A549 (cell line): ENCODE measurements at regions of chr12 and their contacts with region 1.

Region 1: GRCh38 chr12:108618079-108618952 is 15.4 kb downstream of the SELPLG start:
- DNase-seq: peak; percentile 86 to 90
- ATAC-seq: peak; percentile 81 to 94
- H3K4me3 ChIP-seq: no peak overlapping the region
- H3K27ac ChIP-seq: peak overlapping the region in 1 of 2 experiments; percentile 17; a peak in 2 of 6 replicates
- H3K4me1 ChIP-seq: peaks cover 7% of the 10 kb centered on the region
- CTCF ChIP-seq: peak; percentile 96
- EP300 ChIP-seq: no peak
- POLR2A ChIP-seq: no peak
- RAD21 ChIP-seq: peak; percentile 96 to 98

Region 2: GRCh38 chr12:108514973-108515814 is 103.1 kb before region 1 on chr12 and contains the start of gene FICD:
- CTCF ChIA-PET with region 1: interaction called, 15 read pairs
- POLR2A ChIA-PET with region 1: no interaction called
- DNase-seq: peak; percentile 95 to 99
- ATAC-seq: peak; percentile 88 to 93
- H3K4me3 ChIP-seq: peak within 1 kb of the TSS; percentile 66
- H3K27ac ChIP-seq: peak within 1 kb of the TSS; percentile 66 to 85
- H3K4me1 ChIP-seq: no peaks in the 10 kb centered on the region; the same call in 2 of the 3 replicates
- CTCF ChIP-seq: no peak
- EP300 ChIP-seq: no peak
- POLR2A ChIP-seq: peak; percentile 53
- RAD21 ChIP-seq: no peak
- polyA plus RNA-seq, gene FICD: 1.7 and 4.8 TPM in 2 replicates

Region 3: GRCh38 chr12:108562348-108563135 is 55.8 kb before region 1 on chr12 and contains the start of gene ISCU:
- CTCF ChIA-PET with region 1: interaction called, 533 read pairs
- POLR2A ChIA-PET with region 1: interaction called, 11 read pairs
- DNase-seq: peak; percentile 93 to 99
- ATAC-seq: peak; percentile 72 to 87
- H3K4me3 ChIP-seq: peak within 1 kb of the TSS; percentile 82
- H3K27ac ChIP-seq: peak within 1 kb of the TSS; percentile 91 to 95
- H3K4me1 ChIP-seq: peaks cover 37% of the 10 kb centered on the region
- CTCF ChIP-seq: no peak
- EP300 ChIP-seq: no peak
- POLR2A ChIP-seq: peak; percentile 97
- RAD21 ChIP-seq: no peak
- polyA plus RNA-seq, gene ISCU: 174 and 177 TPM in 2 replicates

Region 4: DNA sequence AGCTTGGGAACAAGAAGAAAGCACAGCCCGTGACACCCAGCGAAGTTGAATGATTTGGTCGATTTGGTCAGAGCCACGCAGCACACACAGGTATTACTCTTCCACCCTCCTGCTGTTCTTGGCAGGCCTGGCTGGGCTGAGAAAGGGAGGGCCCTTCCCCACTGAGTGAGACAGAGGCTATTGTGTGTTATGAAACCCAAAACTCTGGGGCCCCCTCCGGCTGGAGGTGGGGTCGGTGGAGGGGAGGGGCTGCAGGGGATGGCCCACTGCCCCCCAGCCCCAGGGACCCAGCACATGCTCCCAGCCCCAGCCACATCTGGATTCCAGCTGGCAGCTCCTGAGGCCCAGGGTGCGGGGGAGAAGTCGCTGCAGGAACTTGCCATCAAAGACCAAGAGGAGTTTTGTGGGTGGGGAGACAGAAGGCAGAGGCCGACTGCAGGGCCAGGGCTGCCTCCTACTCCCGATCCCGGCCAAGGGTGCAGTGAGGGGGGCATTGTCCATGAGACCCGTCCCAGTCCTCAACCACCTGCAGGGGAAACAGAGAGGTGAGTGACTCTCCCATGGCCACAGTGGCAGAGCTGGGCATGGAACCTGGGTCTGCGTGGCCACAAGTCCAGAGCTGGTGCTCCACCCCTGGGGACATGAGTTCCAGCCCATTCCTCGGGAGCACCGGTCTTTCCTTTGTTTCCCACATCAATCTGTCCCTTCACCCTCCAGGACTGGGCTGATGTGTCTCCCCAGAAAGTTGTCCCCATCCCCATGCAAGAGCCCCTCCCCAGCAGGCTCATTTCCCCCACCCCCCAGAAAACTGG is 29.1 kb before region 1 on chr12:
- CTCF ChIA-PET with region 1: interaction called, 166 read pairs
- POLR2A ChIA-PET with region 1: no interaction called
- DNase-seq: no peak
- ATAC-seq: peak in 1 of 2 experiments; percentile 42; a peak in 3 of 6 replicates
- H3K4me3 ChIP-seq: no peak overlapping the region
- H3K27ac ChIP-seq: no peak overlapping the region
- H3K4me1 ChIP-seq: no peaks in the 10 kb centered on the region
- CTCF ChIP-seq: no peak
- EP300 ChIP-seq: no peak
- POLR2A ChIP-seq: no peak
- RAD21 ChIP-seq: no peak

Region 5: GRCh38 chr12:108649669-108650068 is 31.4 kb after region 1 on chr12:
- CTCF ChIA-PET with region 1: interaction called, 16 read pairs
- POLR2A ChIA-PET with region 1: no interaction called
- DNase-seq: peak in 1 of 2 experiments; percentile 24
- ATAC-seq: peak; percentile 16 to 46; a peak in 3 of 6 replicates
- H3K4me3 ChIP-seq: no peak overlapping the region
- H3K27ac ChIP-seq: peak overlapping the region in 1 of 2 experiments; percentile 32; a peak in 1 of 6 replicates
- H3K4me1 ChIP-seq: peaks cover 29% of the 10 kb centered on the region
- CTCF ChIP-seq: no peak
- EP300 ChIP-seq: no peak
- POLR2A ChIP-seq: no peak
- RAD21 ChIP-seq: no peak